ENCODE measurements at regions of chr1 and their contacts with region 1.

Region 1: DNA sequence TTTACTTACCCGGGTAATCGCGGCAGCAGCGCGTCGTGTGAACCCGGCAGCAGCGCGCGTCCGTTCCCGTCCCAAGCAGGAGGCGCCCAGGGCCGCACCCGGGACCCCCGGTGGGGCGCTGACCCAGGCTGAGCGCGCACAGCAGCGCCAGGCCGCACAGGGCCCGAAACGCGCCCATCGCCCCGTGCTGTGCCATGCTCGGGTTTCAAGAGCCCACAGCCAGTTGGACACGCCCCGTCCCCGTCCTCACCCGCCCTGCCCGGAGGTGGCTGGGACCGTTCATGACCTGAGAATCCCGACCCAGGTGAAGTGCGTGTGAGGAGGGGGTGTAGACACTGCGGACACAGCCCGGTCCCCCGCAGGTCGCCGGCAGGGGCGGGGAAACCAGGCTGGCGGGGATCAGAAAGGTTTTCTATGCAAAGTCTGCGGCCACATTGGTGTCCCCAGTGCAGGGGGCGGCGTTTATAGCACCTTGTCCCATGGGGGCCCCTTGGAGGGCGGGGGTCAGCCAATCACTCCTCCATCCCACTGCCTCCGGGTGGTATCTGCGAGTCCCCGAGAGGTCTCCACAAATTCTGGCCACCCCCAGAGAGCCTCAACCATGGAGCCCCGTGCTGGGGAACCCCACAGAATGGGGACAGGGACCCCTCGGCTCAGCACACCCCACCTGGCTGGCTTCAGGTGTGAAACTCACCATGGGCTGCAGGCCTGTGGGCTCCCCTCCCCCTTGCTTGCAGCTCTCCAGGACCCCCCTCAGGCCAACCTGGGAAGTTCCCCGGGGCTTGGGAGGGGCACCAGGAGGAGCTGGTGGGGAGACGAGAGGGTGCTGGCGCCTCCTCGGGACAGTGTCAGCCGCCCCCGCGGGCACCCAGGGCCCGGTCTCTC is at the start of gene TNFRSF18:
- DNase-seq: peak; percentile 66
- ATAC-seq: peak; percentile 55
- H3K4me3 Mint-ChIP-seq: peak within 1 kb of the TSS; percentile 81
- H3K27ac Mint-ChIP-seq: peak within 1 kb of the TSS; percentile 46
- H3K4me1 Mint-ChIP-seq: peaks cover 35% of the 10 kb centered on the region
- H3K27me3 Mint-ChIP-seq: peaks cover 2% of the 10 kb centered on the region
- CTCF ChIP-seq: no peak
- total RNA-seq, gene TNFRSF18: 36.7 and 37.5 TPM in 2 replicates

Region 2: GRCh38 chr1:1122078-1122811 is 84.4 kb before region 1 on chr1:
- CTCF ChIA-PET with region 1: interaction called, 7 read pairs
- POLR2A ChIA-PET with region 1: interaction called, 6 read pairs
- intact Hi-C with region 1: loop called (anchors 1 kb)
- DNase-seq: peak; percentile 83
- ATAC-seq: peak; percentile 97
- H3K4me3 Mint-ChIP-seq: peak overlapping the region; percentile 24
- H3K27ac Mint-ChIP-seq: no peak overlapping the region
- H3K4me1 Mint-ChIP-seq: peaks cover 21% of the 10 kb centered on the region
- H3K27me3 Mint-ChIP-seq: peaks cover 5% of the 10 kb centered on the region
- CTCF ChIP-seq: peak; percentile 35

Region 3: DNA sequence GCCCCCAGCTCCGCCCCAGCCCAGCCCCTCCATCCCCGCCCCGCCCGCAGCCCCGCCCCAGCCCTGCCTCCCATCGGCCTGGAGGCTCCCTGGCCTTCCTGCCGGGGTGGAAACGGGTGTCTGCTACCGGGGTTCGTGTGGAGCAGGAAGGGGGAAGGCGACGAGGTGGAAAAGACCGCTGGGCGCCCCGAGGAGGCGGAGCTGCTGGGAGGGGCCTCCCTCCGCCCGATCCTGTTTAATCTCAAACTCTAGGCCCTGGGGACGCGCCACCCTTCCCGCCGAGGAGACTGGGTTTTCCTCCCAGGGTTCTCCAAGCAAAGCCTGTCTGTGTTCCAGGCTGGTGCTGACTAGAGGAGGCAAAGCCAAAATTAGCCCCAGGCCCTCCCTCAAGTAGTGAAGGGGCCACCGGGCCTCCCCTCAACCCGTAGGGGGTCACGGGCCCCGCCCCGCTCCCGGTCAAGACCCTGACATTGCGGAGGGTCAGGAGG is 49.1 kb before region 1 on chr1:
- CTCF ChIA-PET with region 1: no interaction called
- POLR2A ChIA-PET with region 1: interaction called, 7 read pairs
- intact Hi-C with region 1: loop called (anchors 5 kb)
- DNase-seq: peak; percentile 52
- ATAC-seq: peak; percentile 66
- H3K4me3 Mint-ChIP-seq: peak overlapping the region; percentile 84
- H3K27ac Mint-ChIP-seq: peak overlapping the region; percentile 83
- H3K4me1 Mint-ChIP-seq: peaks cover 3% of the 10 kb centered on the region
- H3K27me3 Mint-ChIP-seq: no peaks in the 10 kb centered on the region
- CTCF ChIP-seq: no peak

Region 4: GRCh38 chr1:1231400-1232223 is 25.0 kb after region 1 on chr1 and contains the start of gene SDF4:
- CTCF ChIA-PET with region 1: no interaction called
- POLR2A ChIA-PET with region 1: interaction called, 15 read pairs
- intact Hi-C with region 1: loop called (anchors 2 kb)
- DNase-seq: peak; percentile 91
- ATAC-seq: peak; percentile 94
- H3K4me3 Mint-ChIP-seq: peak within 1 kb of the TSS; percentile 92
- H3K27ac Mint-ChIP-seq: peak within 1 kb of the TSS; percentile 83
- H3K4me1 Mint-ChIP-seq: peaks cover 35% of the 10 kb centered on the region
- H3K27me3 Mint-ChIP-seq: no peaks in the 10 kb centered on the region
- CTCF ChIP-seq: no peak
- total RNA-seq, gene SDF4: 94.4 and 97.9 TPM in 2 replicates